ENCODE measurements at regions of chr17 and their contacts with region 1.

Region 1: DNA sequence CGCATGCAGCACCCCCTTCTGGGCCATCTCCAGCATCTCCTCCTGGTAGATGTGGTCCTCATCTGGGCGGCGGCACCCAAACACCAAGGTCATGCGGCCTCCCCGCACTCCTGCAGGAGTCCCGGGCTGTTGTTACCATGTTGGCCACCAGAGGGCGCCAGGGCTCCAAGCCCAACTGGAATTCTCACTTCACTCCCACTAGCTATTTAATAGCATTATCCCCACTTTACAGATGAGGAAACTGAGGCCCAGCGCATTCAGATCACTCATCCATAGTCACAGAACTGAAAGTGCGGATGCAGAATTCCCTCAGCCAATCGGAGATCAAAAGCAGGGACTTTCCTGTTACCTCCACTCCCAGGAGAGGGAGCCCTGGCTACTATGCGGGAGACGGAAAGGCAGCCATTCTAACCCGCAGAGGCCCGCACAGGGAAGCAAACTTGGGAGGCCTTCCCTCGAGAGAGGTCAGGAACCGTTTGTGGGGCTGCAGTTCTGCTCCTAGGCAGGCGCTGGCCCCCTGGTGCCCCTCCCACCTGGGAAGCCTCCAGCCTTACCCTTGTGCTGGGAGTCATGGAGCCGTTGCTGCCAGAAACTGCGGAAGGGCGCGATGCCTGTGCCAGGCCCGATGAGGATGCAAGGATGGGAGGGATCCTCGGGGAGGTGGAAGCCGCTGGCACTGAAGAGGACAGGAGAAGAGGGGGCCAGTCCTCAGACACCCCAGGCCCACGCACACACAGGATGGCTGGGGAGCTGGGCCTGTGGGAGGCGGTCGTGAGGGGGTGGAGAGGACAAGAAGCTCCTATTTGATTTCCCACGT is 40.1 kb downstream of the NOS2 start:
- DNase-seq: peak; percentile 87
- ATAC-seq: peak; percentile 85
- H3K4me3 Mint-ChIP-seq: no peak overlapping the region
- H3K27ac Mint-ChIP-seq: no peak overlapping the region
- H3K4me1 Mint-ChIP-seq: no peaks in the 10 kb centered on the region
- H3K27me3 Mint-ChIP-seq: no peaks in the 10 kb centered on the region
- CTCF ChIP-seq: peak; percentile 99

Region 2: DNA sequence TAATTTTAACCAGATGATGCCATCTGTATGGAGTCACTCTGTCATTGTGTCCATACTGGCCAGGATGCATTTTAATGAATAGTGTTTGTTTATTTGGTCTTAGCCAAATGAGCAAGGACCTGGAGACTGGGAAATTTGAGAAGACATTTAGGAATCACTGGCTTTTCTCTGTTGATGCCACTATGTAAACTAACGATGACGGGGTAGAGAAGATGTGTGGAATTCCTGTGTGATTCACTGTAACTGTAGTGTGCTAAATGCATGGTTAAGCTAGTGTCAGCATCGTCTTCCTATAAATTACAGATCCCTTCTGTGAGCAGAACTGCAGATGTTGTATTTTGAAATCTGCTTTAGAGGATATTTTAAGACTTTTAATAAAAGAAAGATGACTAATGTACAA is 26.5 kb before region 1 on chr17:
- CTCF ChIA-PET with region 1: no interaction called
- POLR2A ChIA-PET with region 1: no interaction called
- DNase-seq: no peak
- ATAC-seq: no peak
- H3K4me3 Mint-ChIP-seq: no peak overlapping the region
- H3K27ac Mint-ChIP-seq: no peak overlapping the region
- H3K4me1 Mint-ChIP-seq: no peaks in the 10 kb centered on the region
- H3K27me3 Mint-ChIP-seq: no peaks in the 10 kb centered on the region; the same call in none of the 2 replicates
- CTCF ChIP-seq: no peak

Region 3: GRCh38 chr17:27747462-27748359 is 12.6 kb before region 1 on chr17:
- CTCF ChIA-PET with region 1: interaction called, 22 read pairs
- POLR2A ChIA-PET with region 1: interaction called, 3 read pairs
- DNase-seq: peak; percentile 78
- ATAC-seq: peak; percentile 92
- H3K4me3 Mint-ChIP-seq: no peak overlapping the region
- H3K27ac Mint-ChIP-seq: no peak overlapping the region
- H3K4me1 Mint-ChIP-seq: peaks cover 4% of the 10 kb centered on the region; the same call in 1 of the 2 replicates
- H3K27me3 Mint-ChIP-seq: no peaks in the 10 kb centered on the region
- CTCF ChIP-seq: peak; percentile 74

Region 4: DNA sequence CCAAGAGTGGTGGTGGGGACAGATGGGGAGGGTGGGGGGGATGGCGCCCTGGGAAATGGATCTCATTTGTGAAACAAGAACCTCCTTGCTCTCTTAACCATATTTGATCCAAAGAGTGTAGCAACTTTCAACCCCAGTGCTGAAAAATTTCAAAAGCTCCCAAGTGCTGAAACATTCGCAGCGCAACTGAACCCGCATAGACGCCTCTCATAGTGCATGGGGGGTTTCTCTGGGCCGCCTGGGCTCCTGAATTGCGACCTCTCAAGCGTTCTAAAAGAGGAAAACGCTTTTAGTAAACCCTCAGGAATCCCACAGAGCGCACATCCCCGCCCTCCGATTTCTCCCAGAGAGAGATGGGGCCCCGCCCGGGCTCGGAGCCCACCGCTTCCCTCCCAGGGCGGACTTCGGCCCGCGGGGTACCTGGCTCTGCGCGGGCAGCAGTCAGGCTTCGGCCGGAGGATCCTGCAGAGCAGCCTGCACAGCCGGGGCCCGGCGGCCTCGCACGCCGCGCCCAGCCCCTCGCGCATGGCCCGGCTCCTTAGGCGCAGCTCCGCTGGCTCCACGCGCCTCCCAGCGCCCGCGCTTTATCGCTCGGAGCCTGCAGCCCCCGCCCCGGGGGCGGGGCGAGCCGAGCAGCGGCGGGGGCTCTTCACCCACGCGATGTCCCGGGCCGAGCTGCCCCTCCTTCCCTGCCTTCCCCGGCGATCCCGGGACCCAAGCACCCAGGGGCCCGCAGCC is 33.1 kb after region 1 on chr17:
- CTCF ChIA-PET with region 1: interaction called, 11 read pairs
- POLR2A ChIA-PET with region 1: no interaction called
- DNase-seq: peak; percentile 51
- ATAC-seq: peak; percentile 76
- H3K4me3 Mint-ChIP-seq: peak overlapping the region; percentile 62
- H3K27ac Mint-ChIP-seq: no peak overlapping the region
- H3K4me1 Mint-ChIP-seq: peaks cover 7% of the 10 kb centered on the region
- H3K27me3 Mint-ChIP-seq: peaks cover 35% of the 10 kb centered on the region
- CTCF ChIP-seq: no peak